ENCODE measurements at regions of chr15 and their contacts with region 1.

Region 1: GRCh38 chr15:40440743-40441564 is at the start of gene BAHD1:
- DNase-seq: peak; percentile 98
- ATAC-seq: peak; percentile 94
- H3K4me3 Mint-ChIP-seq: peak within 1 kb of the TSS; percentile 78
- H3K27ac Mint-ChIP-seq: peak within 1 kb of the TSS; percentile 67
- H3K4me1 Mint-ChIP-seq: peaks cover 34% of the 10 kb centered on the region
- H3K27me3 Mint-ChIP-seq: peaks cover 47% of the 10 kb centered on the region
- total RNA-seq, gene BAHD1: 24.1 to 25.6 TPM

Region 2: DNA sequence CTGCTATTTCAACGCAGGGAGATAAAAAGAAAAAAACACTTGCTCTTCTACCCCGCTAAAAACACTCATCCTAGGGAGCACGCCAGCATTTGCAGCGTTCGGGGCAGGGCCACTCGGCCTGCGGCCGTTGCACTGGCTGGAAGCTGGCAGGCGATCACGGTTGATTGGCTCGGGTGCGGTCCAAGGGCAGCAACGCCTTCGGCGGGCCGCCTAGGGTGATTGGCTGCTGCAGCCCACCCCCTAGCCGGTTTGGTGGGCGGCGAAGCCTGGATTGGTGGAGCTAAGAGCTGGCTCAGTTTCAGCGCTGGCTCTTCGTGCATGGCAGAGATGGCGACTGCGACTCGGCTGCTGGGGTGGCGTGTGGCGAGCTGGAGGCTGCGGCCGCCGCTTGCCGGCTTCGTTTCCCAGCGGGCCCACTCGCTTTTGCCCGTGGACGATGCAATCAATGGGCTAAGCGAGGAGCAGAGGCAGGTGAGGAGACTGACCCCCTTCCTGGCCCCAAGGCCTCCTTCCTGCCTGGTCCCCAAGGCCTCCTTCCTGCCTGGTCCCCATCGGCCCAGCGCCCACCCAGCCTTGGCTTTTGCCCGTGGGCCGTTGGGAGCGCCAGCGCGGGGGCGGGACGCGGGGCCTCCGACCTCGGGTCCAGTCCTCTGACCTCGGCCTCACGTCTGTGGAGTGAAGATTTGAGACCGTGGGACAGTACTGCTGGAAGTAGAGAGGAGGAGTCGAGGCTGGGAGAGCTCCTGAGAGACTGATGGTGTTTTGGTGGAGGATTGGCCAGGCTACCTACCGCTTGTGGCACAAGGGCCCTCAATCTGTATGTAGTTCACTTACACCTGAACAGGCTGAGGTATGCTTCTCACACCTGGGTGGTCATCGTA is 35.2 kb before region 1 on chr15 and contains the start of gene IVD:
- CTCF ChIA-PET with region 1: interaction called, 16 read pairs
- DNase-seq: peak; percentile 97
- ATAC-seq: peak; percentile 99
- H3K4me3 Mint-ChIP-seq: peak within 1 kb of the TSS; percentile 76
- H3K27ac Mint-ChIP-seq: peak within 1 kb of the TSS; percentile 90
- H3K4me1 Mint-ChIP-seq: peaks cover 54% of the 10 kb centered on the region
- H3K27me3 Mint-ChIP-seq: no peaks in the 10 kb centered on the region
- total RNA-seq, gene IVD: 70.3 to 87.2 TPM

Region 3: GRCh38 chr15:40454904-40455391 is 14.0 kb after region 1 on chr15:
- CTCF ChIA-PET with region 1: interaction called, 54 read pairs
- DNase-seq: no peak
- ATAC-seq: no peak
- H3K4me3 Mint-ChIP-seq: no peak overlapping the region
- H3K27ac Mint-ChIP-seq: peak overlapping the region; percentile 42
- H3K4me1 Mint-ChIP-seq: peaks cover 50% of the 10 kb centered on the region
- H3K27me3 Mint-ChIP-seq: no peaks in the 10 kb centered on the region

Region 4: DNA sequence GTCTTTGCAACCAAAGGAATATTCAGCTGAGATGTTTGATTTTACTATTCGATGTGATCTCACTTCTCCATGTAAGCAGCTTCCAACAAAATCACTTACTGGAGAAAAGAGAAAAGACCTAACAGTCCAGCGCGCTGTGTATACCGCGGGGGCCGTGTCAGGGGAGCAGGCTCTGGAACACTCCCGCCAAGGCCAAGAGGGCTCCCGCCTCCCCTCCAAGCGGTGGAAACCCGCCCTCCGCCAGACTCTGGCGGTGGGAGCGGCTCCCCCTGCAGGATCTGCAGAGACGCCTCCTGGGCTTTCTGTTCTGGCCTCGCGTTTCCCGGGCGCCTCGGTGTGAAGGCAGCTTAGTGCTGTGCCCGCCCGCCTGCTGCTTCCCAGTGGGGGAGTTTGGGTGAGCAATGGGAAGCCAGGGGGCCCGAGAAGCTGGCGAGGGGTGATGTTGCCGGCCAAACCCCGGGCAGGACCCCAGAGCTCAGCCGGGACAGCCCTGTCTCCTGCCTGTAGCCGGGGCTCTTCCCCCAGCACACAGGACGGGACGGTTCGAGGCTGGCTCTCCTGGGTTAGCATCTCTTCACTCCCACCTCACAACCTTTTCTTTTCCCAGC is 66.1 kb after region 1 on chr15:
- CTCF ChIA-PET with region 1: interaction called, 17 read pairs
- DNase-seq: peak; percentile 77
- ATAC-seq: peak; percentile 86
- H3K4me3 Mint-ChIP-seq: peak overlapping the region; percentile 10
- H3K27ac Mint-ChIP-seq: no peak overlapping the region
- H3K4me1 Mint-ChIP-seq: peaks cover 22% of the 10 kb centered on the region
- H3K27me3 Mint-ChIP-seq: peaks cover 74% of the 10 kb centered on the region